ENCODE measurements at regions of chr21 and their contacts with region 1.

Region 1: GRCh38 chr21:36773117-36773516 is 74.2 kb downstream of the SIM2 start:
- DNase-seq: peak; percentile 76 to 91 (median 90)
- ATAC-seq: peak; percentile 96 to 97 (median 96)
- H3K4me3 ChIP-seq: no peak overlapping the region
- H3K27ac ChIP-seq: peak overlapping the region in 1 of 12 donors; percentile 35
- H3K4me1 ChIP-seq: peaks cover 0 to 27% (median 18%) of the 10 kb centered on the region in 12 donors
- H3K27me3 ChIP-seq: no peaks in the 10 kb centered on the region
- CTCF ChIP-seq: no peak
- POLR2A ChIP-seq: no peak

Region 2: DNA sequence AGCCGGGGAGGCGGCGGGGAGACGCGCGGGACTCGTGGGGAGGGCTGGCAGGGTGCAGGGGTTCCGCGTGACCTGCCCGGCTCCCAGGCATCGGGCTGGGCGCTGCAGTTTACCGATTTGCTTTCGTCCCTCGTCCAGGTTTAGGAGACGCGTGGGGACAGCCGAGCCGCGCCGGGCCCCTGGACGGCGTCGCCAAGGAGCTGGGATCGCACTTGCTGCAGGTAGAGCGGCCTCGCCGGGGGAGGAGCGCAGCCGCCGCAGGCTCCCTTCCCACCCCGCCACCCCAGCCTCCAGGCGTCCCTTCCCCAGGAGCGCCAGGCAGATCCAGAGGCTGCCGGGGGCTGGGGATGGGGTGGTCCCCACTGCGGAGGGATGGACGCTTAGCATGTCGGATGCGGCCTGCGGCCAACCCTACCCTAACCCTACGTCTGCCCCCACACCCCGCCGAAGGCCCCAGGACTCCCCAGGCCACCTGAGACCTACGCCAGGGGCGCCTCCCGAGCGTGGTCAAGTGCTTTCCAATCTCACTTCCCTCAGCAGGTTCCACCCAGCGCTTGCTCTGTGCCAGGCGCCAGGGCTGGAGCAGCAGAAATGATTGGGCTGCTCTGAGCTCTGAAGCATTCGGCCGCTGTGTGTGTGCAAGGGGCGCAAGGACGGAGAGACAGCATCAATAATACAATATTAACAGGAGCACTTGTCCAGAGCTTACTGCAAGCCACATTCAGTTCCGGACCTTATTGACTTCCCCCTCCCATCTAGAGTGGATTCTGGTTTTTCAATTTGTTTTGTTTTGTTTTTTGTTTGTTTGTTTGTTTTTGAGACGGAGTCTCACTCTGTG is 63.9 kb before region 1 on chr21:
- intact Hi-C with region 1: no loop called
- DNase-seq: peak in 1 of 5 donors; percentile 16
- ATAC-seq: peak in 1 of 4 donors; percentile 20
- H3K4me3 ChIP-seq: peak overlapping the region in 4 of 12 donors; percentile 8 to 27 (median 13)
- H3K27ac ChIP-seq: no peak overlapping the region
- H3K4me1 ChIP-seq: peaks cover 0 to 64% (median 33%) of the 10 kb centered on the region in 12 donors
- H3K27me3 ChIP-seq: peaks cover 77 to 100% (median 95%) of the 10 kb centered on the region in 9 donors
- CTCF ChIP-seq: no peak
- POLR2A ChIP-seq: no peak

Region 3: DNA sequence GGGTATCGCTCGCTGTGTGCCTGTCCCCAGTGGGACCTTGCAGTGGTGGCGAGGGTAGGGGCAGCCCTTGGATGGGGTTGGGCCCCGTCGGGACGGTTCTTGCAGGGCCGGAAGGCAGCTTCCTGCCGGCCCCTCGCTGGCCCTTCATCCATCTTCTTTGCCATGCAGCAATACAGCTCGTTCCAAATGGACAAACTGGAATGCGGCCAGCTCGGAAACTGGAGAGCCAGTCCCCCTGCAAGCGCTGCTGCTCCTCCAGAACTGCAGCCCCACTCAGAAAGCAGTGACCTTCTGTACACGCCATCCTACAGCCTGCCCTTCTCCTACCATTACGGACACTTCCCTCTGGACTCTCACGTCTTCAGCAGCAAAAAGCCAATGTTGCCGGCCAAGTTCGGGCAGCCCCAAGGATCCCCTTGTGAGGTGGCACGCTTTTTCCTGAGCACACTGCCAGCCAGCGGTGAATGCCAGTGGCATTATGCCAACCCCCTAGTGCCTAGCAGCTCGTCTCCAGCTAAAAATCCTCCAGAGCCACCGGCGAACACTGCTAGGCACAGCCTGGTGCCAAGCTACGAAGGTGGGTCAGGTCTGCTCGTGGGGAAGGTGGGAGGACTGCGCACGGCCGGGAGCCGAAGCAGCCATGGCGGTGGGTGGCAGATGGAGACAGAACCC is 28.4 kb before region 1 on chr21:
- intact Hi-C with region 1: no loop called
- DNase-seq: peak in 2 of 5 donors; percentile 23 to 38
- ATAC-seq: peak in 3 of 4 donors; percentile 25 to 43 (median 33)
- H3K4me3 ChIP-seq: peak overlapping the region in 1 of 12 donors; percentile 10
- H3K27ac ChIP-seq: no peak overlapping the region
- H3K4me1 ChIP-seq: peaks cover 0 to 19% (median 5%) of the 10 kb centered on the region in 12 donors
- H3K27me3 ChIP-seq: peaks cover 0 to 29% (median 0%) of the 10 kb centered on the region in 9 donors
- CTCF ChIP-seq: no peak
- POLR2A ChIP-seq: no peak

Region 4: DNA sequence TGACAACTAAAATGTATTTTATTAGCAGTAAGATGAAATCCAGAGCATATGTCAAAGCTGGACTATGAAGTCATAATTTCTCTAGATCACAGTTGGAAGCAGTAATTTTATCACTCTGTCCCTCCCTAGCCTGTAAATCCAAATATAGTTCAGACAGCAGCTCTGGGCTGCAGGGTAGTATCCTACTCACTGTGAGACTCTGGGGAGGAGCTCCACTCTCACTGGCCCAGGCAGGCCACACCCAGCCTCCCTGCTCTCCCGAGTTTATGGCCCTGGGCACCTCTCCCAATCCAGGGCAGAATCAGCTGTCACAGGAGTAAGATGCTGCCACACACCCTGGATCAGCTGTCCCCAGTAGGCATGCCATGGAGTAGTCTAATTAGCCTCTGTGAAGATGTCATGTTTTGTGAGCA is 62.3 kb after region 1 on chr21:
- intact Hi-C with region 1: loop called in 1 of 10 experiments (anchors 5 kb)
- DNase-seq: peak in 4 of 5 donors; percentile 50 to 81 (median 56)
- ATAC-seq: peak; percentile 94 to 99 (median 98)
- H3K4me3 ChIP-seq: no peak overlapping the region
- H3K27ac ChIP-seq: peak overlapping the region in 3 of 12 donors; percentile 18 to 31 (median 21)
- H3K4me1 ChIP-seq: peaks cover 0 to 22% (median 0%) of the 10 kb centered on the region in 12 donors
- H3K27me3 ChIP-seq: no peaks in the 10 kb centered on the region
- CTCF ChIP-seq: no peak
- POLR2A ChIP-seq: no peak

Region 5: GRCh38 chr21:37380349-37381323 is 607.5 kb after region 1 on chr21:
- intact Hi-C with region 1: no loop called
- DNase-seq: peak in 2 of 5 donors; percentile 34 to 48
- ATAC-seq: peak in 3 of 4 donors; percentile 61 to 64 (median 63)
- H3K4me3 ChIP-seq: no peak overlapping the region
- H3K27ac ChIP-seq: peak overlapping the region in 5 of 12 donors; percentile 10 to 48 (median 27)
- H3K4me1 ChIP-seq: peaks cover 2 to 95% (median 74%) of the 10 kb centered on the region in 12 donors
- H3K27me3 ChIP-seq: no peaks in the 10 kb centered on the region
- CTCF ChIP-seq: no peak
- POLR2A ChIP-seq: no peak